Naive thymus-derived CD4-positive, alpha-beta T cell (primary cell): ENCODE measurements at regions of chr13 and their contacts with region 1.

Region 1: DNA sequence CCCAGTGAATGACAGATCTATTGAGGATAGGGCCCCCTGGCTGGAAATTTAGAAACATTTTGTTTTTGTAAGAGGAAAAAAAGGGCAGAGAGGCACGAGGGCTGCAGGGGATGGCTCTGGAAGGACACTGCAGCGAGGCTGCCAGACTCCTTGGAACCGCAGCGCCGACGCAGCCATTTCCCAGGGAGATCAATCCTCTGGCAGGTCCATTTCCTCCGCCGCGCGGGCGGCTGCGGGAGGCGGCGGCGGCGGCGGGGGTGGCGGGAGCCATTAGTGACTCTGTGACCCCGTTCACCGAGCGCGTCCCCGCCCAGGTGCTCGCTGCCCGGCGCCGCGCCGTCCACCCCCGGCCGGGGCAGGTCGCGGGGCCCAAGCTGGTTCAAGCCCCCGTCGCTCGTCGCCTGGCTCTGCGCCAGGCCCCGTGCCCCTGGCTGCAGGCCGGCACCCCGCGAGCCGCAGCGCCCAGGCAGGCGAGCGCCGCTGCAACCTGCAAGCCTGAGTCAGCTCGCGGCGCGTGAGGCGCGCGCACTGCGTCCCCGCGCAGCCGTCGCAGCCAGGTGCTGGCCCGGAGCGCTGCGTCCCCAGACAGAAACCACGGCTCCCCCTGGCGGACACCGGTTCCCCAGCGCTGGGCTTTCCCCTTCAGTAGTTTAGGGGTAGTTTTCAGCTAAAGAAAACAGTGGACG is 192.6 kb downstream of the KATNAL1 start:
- DNase-seq: peak; percentile 81 to 94 (median 91)
- ATAC-seq: peak; percentile 95
- H3K4me3 ChIP-seq: peak overlapping the region; percentile 48
- H3K4me3 Mint-ChIP-seq: peak overlapping the region; percentile 74 to 89 (median 84)
- H3K27ac ChIP-seq: peak overlapping the region; percentile 39
- H3K27ac Mint-ChIP-seq: peak overlapping the region in 8 of 9 donors; percentile 43 to 90 (median 80)
- H3K4me1 ChIP-seq: peaks cover 10 to 17% of the 10 kb centered on the region in 2 donors
- H3K4me1 Mint-ChIP-seq: peaks cover 17 to 41% (median 34%) of the 10 kb centered on the region in 7 donors
- H3K27me3 ChIP-seq: no peaks in the 10 kb centered on the region
- H3K27me3 Mint-ChIP-seq: peaks cover 0 to 11% (median 0%) of the 10 kb centered on the region in 5 donors

Region 2: GRCh38 chr13:29472332-29472961 is 642.3 kb before region 1 on chr13:
- CTCF ChIA-PET with region 1: no interaction called
- POLR2A ChIA-PET with region 1: no interaction called
- intact Hi-C with region 1: loop called in 1 of 2 experiments (anchors 1 kb)
- DNase-seq: peak in 5 of 9 donors; percentile 10 to 46 (median 17)
- ATAC-seq: peak; percentile 69
- H3K4me3 ChIP-seq: no peak overlapping the region
- H3K4me3 Mint-ChIP-seq: no peak overlapping the region
- H3K27ac ChIP-seq: no peak overlapping the region
- H3K27ac Mint-ChIP-seq: no peak overlapping the region
- H3K4me1 ChIP-seq: no peaks in the 10 kb centered on the region
- H3K4me1 Mint-ChIP-seq: peaks cover 0 to 2% (median 0%) of the 10 kb centered on the region in 7 donors
- H3K27me3 ChIP-seq: no peaks in the 10 kb centered on the region
- H3K27me3 Mint-ChIP-seq: peaks cover 3 to 12% (median 5%) of the 10 kb centered on the region in 5 donors

Region 3: DNA sequence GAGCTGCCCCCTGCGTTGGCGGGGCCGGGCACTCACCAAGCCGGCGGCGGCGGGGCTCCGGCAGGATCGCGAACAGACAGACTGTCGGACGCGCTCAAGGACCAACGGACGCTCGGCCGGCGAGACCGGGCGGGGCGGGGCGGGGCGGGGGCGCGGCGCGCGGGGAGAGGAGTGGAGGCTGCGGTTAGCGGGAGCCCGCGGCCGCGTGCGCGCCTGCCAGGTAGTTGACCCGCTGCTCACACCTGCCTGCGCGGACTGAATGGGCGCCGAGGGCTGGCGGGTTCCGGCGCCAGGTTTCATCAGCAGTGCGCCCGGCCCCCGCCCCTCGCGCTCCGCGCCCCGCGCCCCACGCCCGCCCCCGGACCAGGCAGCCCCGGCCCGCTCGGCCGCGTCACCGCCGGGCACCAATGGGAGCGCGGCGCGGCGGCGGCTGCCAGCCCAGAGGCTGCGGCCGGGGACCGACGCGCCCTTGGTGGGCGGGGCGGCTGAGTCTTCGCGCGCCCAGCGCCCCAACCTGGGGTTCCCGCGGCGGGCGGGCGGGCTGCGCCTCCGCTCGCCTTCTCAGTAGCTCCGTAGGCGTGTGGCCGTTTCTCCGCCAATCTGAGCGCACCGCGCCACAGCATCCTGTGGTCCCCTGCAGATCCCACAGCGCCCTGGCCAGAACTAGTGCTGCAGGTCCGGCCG is 519.2 kb before region 1 on chr13 and contains the start of gene SLC7A1:
- CTCF ChIA-PET with region 1: no interaction called
- POLR2A ChIA-PET with region 1: no interaction called
- intact Hi-C with region 1: loop called (anchors 2 to 5 kb)
- DNase-seq: peak; percentile 74 to 93 (median 85)
- ATAC-seq: peak; percentile 95
- H3K4me3 ChIP-seq: peak within 1 kb of the TSS; percentile 73
- H3K4me3 Mint-ChIP-seq: peak within 1 kb of the TSS; percentile 88 to 94 (median 90)
- H3K27ac ChIP-seq: peak within 1 kb of the TSS; percentile 82
- H3K27ac Mint-ChIP-seq: peak within 1 kb of the TSS; percentile 74 to 96 (median 87)
- H3K4me1 ChIP-seq: peaks cover 6 to 7% of the 10 kb centered on the region in 2 donors
- H3K4me1 Mint-ChIP-seq: peaks cover 26 to 49% (median 43%) of the 10 kb centered on the region in 7 donors
- H3K27me3 ChIP-seq: no peaks in the 10 kb centered on the region
- H3K27me3 Mint-ChIP-seq: peaks cover 0 to 3% (median 2%) of the 10 kb centered on the region in 5 donors
- total RNA-seq, gene SLC7A1: 12.2 to 63.8 (median 28.2) TPM

Region 4: GRCh38 chr13:29771247-29771646 is 343.5 kb before region 1 on chr13:
- CTCF ChIA-PET with region 1: interaction called, 206 read pairs
- POLR2A ChIA-PET with region 1: interaction called, 22 read pairs
- intact Hi-C with region 1: loop called (anchors 1 kb)
- DNase-seq: peak in 7 of 9 donors; percentile 31 to 67 (median 52)
- ATAC-seq: peak; percentile 77
- H3K4me3 ChIP-seq: no peak overlapping the region
- H3K4me3 Mint-ChIP-seq: no peak overlapping the region
- H3K27ac ChIP-seq: no peak overlapping the region
- H3K27ac Mint-ChIP-seq: peak overlapping the region in 1 of 9 donors; percentile 11
- H3K4me1 ChIP-seq: no peaks in the 10 kb centered on the region
- H3K4me1 Mint-ChIP-seq: peaks cover 0 to 14% (median 4%) of the 10 kb centered on the region in 7 donors
- H3K27me3 ChIP-seq: no peaks in the 10 kb centered on the region
- H3K27me3 Mint-ChIP-seq: no peaks in the 10 kb centered on the region

Region 5: GRCh38 chr13:29954082-29955028 is 160.4 kb before region 1 on chr13:
- CTCF ChIA-PET with region 1: interaction called, 5 read pairs
- POLR2A ChIA-PET with region 1: interaction called, 6 read pairs
- intact Hi-C with region 1: loop called in 1 of 2 experiments (anchors 1 kb)
- DNase-seq: peak in 8 of 9 donors; percentile 33 to 77 (median 70)
- ATAC-seq: peak; percentile 79
- H3K4me3 ChIP-seq: peak overlapping the region; percentile 43
- H3K4me3 Mint-ChIP-seq: peak overlapping the region; percentile 72 to 90 (median 84)
- H3K27ac ChIP-seq: peak overlapping the region; percentile 69
- H3K27ac Mint-ChIP-seq: peak overlapping the region; percentile 79 to 94 (median 89)
- H3K4me1 ChIP-seq: peaks cover 20 to 30% of the 10 kb centered on the region in 2 donors
- H3K4me1 Mint-ChIP-seq: peaks cover 22 to 81% (median 53%) of the 10 kb centered on the region in 7 donors
- H3K27me3 ChIP-seq: no peaks in the 10 kb centered on the region
- H3K27me3 Mint-ChIP-seq: peaks cover 0 to 15% (median 0%) of the 10 kb centered on the region in 5 donors

Region 6: DNA sequence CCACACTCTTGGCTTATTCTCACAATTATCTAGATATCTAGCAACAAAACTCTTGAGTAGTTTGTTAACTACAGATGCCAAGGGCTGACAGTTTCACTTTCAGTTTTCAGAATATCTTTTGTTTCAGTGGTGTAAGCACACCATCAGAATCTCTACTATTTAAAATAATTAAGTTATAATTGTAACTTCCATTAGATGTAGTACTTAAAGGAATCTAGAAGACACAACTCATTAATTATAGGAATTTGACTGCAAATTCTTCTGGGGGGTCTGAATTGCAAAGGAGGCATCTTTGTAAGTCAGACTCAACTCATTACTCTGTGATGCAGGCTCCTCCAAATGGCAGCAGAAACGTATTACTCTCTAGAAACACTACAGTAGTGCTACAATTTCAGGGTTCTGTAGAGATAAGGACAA is 458.2 kb after region 1 on chr13:
- CTCF ChIA-PET with region 1: interaction called, 4 read pairs
- POLR2A ChIA-PET with region 1: no interaction called
- intact Hi-C with region 1: loop called in 1 of 2 experiments (anchors 5 kb)
- DNase-seq: peak in 7 of 9 donors; percentile 19 to 65 (median 49)
- ATAC-seq: peak; percentile 69
- H3K4me3 ChIP-seq: peak overlapping the region; percentile 55
- H3K4me3 Mint-ChIP-seq: peak overlapping the region; percentile 66 to 88 (median 81)
- H3K27ac ChIP-seq: peak overlapping the region; percentile 81
- H3K27ac Mint-ChIP-seq: peak overlapping the region; percentile 88 to 97 (median 94)
- H3K4me1 ChIP-seq: peaks cover 13 to 24% of the 10 kb centered on the region in 2 donors
- H3K4me1 Mint-ChIP-seq: peaks cover 14 to 42% (median 36%) of the 10 kb centered on the region in 7 donors
- H3K27me3 ChIP-seq: no peaks in the 10 kb centered on the region
- H3K27me3 Mint-ChIP-seq: peaks cover 0 to 3% (median 0%) of the 10 kb centered on the region in 5 donors